ENCODE measurements at regions of chr18 and their contacts with region 1.

Region 1: GRCh38 chr18:3245853-3246634 is 1.6 kb upstream of the MYL12A start:
- DNase-seq: no peak
- ATAC-seq: peak; percentile 71
- H3K4me3 ChIP-seq: peak overlapping the region; percentile 91
- H3K27ac ChIP-seq: peak overlapping the region; percentile 95
- H3K4me1 ChIP-seq: no peaks in the 10 kb centered on the region
- H3K27me3 ChIP-seq: no peaks in the 10 kb centered on the region
- CTCF ChIP-seq: peak; percentile 98 to 99 (median 98)
- EP300 ChIP-seq: 0 out of 4 replicates have a peak, but pooled peaks of 1 of the 2 experiments have one; percentile 38
- POLR2A ChIP-seq: peak; percentile 60
- RAD21 ChIP-seq: peak; percentile 96

Region 2: GRCh38 chr18:2932247-2933181 is 313.5 kb before region 1 on chr18:
- CTCF ChIA-PET with region 1: interaction called, 62 read pairs
- POLR2A ChIA-PET with region 1: interaction called, 6 read pairs
- RAD21 ChIA-PET with region 1: interaction called, 74 read pairs
- SMC1A ChIA-PET with region 1: interaction called, 66 read pairs
- in situ Hi-C with region 1: loop called (anchors 5 kb)
- intact Hi-C with region 1: loop called (anchors 1 kb)
- DNase-seq: peak; percentile 23
- ATAC-seq: peak; percentile 76
- H3K4me3 ChIP-seq: no peak overlapping the region
- H3K27ac ChIP-seq: no peak overlapping the region
- H3K4me1 ChIP-seq: no peaks in the 10 kb centered on the region
- H3K27me3 ChIP-seq: no peaks in the 10 kb centered on the region
- CTCF ChIP-seq: peak; percentile 40 to 71 (median 59); a peak in 5 of 6 replicates
- EP300 ChIP-seq: no peak
- POLR2A ChIP-seq: no peak
- RAD21 ChIP-seq: peak; percentile 94

Region 3: GRCh38 chr18:2971741-2972552 is 274.1 kb before region 1 on chr18:
- CTCF ChIA-PET with region 1: interaction called, 20 read pairs
- POLR2A ChIA-PET with region 1: interaction called, 13 read pairs
- RAD21 ChIA-PET with region 1: interaction called, 11 read pairs
- SMC1A ChIA-PET with region 1: interaction called, 22 read pairs
- in situ Hi-C with region 1: no loop called
- intact Hi-C with region 1: loop called (anchors 5 kb)
- DNase-seq: peak; percentile 90
- ATAC-seq: peak; percentile 89
- H3K4me3 ChIP-seq: peak overlapping the region; percentile 60
- H3K27ac ChIP-seq: peak overlapping the region; percentile 94
- H3K4me1 ChIP-seq: peaks cover 51% of the 10 kb centered on the region
- H3K27me3 ChIP-seq: no peaks in the 10 kb centered on the region
- CTCF ChIP-seq: no peak
- EP300 ChIP-seq: peak; percentile 32 to 48; a peak in 1 of 4 replicates
- POLR2A ChIP-seq: peak; percentile 78
- RAD21 ChIP-seq: no peak

Region 4: DNA sequence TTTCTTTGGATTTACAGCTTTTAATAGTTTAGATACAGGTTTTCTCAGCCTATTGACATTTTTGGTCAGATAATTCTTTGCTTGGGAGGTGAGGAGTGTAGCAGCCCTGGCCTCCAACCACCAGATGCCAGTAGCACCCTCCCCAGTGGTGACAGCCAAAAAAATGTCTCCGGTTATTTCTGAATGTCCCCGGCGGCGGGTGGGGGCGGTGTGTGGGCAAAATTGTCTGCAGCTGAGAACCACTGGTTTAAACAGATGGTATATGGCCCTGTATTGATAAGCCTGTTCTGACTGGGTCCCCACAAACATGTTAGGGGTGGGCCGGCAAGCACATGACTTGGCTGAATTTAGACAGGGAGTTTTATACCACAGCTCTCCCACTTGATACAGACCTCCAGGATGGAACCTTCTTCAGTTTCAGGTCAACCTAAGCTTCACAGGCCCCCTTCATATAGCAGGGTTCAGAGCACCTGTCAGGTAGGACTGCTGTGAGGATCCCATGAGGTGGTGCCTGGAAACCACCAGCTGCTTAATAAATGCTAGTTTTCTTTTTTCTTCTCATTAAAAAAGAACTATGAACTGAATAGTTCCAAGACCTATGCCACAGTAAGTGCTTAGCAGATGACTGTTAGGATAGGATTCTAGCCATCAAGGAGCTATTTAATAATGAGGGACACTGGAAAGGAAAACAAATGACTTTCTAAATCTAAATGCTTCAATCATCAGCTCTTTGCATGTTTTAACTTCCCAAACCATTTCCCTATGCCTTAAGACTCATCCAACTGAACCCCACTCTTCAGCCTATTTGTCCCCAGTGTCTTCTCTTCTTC is 251.2 kb before region 1 on chr18:
- CTCF ChIA-PET with region 1: interaction called, 99 read pairs
- POLR2A ChIA-PET with region 1: interaction called, 9 read pairs
- RAD21 ChIA-PET with region 1: interaction called, 74 read pairs
- SMC1A ChIA-PET with region 1: interaction called, 46 read pairs
- in situ Hi-C with region 1: loop called (anchors 5 kb)
- intact Hi-C with region 1: loop called (anchors 1 kb)
- DNase-seq: no peak
- ATAC-seq: peak; percentile 93
- H3K4me3 ChIP-seq: no peak overlapping the region
- H3K27ac ChIP-seq: peak overlapping the region; percentile 53; the same call in 1 of the 2 replicates
- H3K4me1 ChIP-seq: peaks cover 33% of the 10 kb centered on the region
- H3K27me3 ChIP-seq: no peaks in the 10 kb centered on the region
- CTCF ChIP-seq: peak; percentile 69 to 71 (median 70)
- EP300 ChIP-seq: no peak
- POLR2A ChIP-seq: no peak
- RAD21 ChIP-seq: peak; percentile 84

Region 5: GRCh38 chr18:3119401-3120335 is 126.4 kb before region 1 on chr18:
- CTCF ChIA-PET with region 1: interaction called, 5 read pairs
- POLR2A ChIA-PET with region 1: no interaction called
- RAD21 ChIA-PET with region 1: interaction called, 7 read pairs
- SMC1A ChIA-PET with region 1: interaction called, 4 read pairs
- in situ Hi-C with region 1: no loop called
- intact Hi-C with region 1: loop called (anchors 2 kb)
- DNase-seq: no peak
- ATAC-seq: no peak
- H3K4me3 ChIP-seq: no peak overlapping the region
- H3K27ac ChIP-seq: no peak overlapping the region
- H3K4me1 ChIP-seq: no peaks in the 10 kb centered on the region
- H3K27me3 ChIP-seq: no peaks in the 10 kb centered on the region; a peak in 1 of 4 replicates
- CTCF ChIP-seq: no peak
- EP300 ChIP-seq: no peak
- POLR2A ChIP-seq: no peak
- RAD21 ChIP-seq: no peak

Region 6: GRCh38 chr18:3177902-3178687 is 67.9 kb before region 1 on chr18:
- CTCF ChIA-PET with region 1: interaction called, 59 read pairs
- POLR2A ChIA-PET with region 1: interaction called, 10 read pairs
- RAD21 ChIA-PET with region 1: interaction called, 22 read pairs
- SMC1A ChIA-PET with region 1: interaction called, 70 read pairs
- in situ Hi-C with region 1: no loop called
- intact Hi-C with region 1: loop called (anchors 1 kb)
- DNase-seq: peak; percentile 98
- ATAC-seq: peak; percentile 91
- H3K4me3 ChIP-seq: 0 out of 2 replicates have a peak overlapping the region, but pooled peaks have one; percentile 6
- H3K27ac ChIP-seq: peak overlapping the region; percentile 97
- H3K4me1 ChIP-seq: peaks cover 50% of the 10 kb centered on the region
- H3K27me3 ChIP-seq: no peaks in the 10 kb centered on the region
- CTCF ChIP-seq: no peak
- EP300 ChIP-seq: peak; percentile 100
- POLR2A ChIP-seq: peak; percentile 78
- RAD21 ChIP-seq: no peak

Region 7: GRCh38 chr18:3593904-3594661 is 348.0 kb after region 1 on chr18:
- CTCF ChIA-PET with region 1: no interaction called
- POLR2A ChIA-PET with region 1: no interaction called
- RAD21 ChIA-PET with region 1: interaction called, 5 read pairs
- SMC1A ChIA-PET with region 1: interaction called, 14 read pairs
- in situ Hi-C with region 1: no loop called
- intact Hi-C with region 1: no loop called
- DNase-seq: peak; percentile 81
- ATAC-seq: peak; percentile 72
- H3K4me3 ChIP-seq: peak overlapping the region; percentile 43; the same call in 1 of the 2 replicates
- H3K27ac ChIP-seq: peak overlapping the region; percentile 90
- H3K4me1 ChIP-seq: peaks cover 37% of the 10 kb centered on the region
- H3K27me3 ChIP-seq: no peaks in the 10 kb centered on the region
- CTCF ChIP-seq: peak; percentile 82 to 95 (median 83)
- EP300 ChIP-seq: peak in 1 of 2 experiments; percentile 53; a peak in 2 of 4 replicates
- POLR2A ChIP-seq: peak; percentile 81
- RAD21 ChIP-seq: peak; percentile 79

Measured in GM12878 (cell line).